Activated CD4-positive, alpha-beta memory T cell treated with anti-CD3 and anti-CD28 coated beads for 36 hours (primary cell): ENCODE measurements at regions of chr18 and their contacts with region 1.

Region 1: DNA sequence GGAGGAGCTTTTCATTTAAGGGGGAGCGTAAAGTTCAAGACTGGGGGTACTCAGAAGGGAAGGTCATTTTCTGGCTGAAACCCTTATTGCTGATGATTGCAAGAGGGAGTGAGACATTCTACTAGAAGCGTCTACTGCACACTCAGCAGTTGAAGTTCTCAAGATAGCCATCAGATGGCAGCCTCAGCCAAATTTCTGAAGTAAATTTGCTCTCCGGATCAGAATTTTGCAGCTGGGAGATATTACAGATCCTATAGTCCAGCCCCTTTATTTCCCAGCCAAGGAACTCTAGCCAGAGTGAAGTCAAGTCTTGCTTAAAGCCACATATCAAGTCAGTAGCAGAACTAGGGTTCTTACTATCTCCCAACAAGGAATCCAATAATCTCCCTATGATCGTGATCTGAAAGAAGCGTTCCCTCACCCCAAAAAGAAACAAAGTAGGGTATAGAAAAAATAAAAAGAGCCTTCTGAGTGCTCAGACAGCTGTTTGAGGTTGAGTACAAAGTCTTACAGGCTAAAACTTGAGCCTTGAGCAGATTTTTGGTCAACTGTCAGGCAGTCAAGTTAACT is 24.0 kb downstream of the RAX start:
- DNase-seq: peak; percentile 54
- H3K4me3 Mint-ChIP-seq: no peak overlapping the region
- H3K27ac Mint-ChIP-seq: no peak overlapping the region
- H3K4me1 Mint-ChIP-seq: no peaks in the 10 kb centered on the region
- H3K27me3 Mint-ChIP-seq: peaks cover 34% of the 10 kb centered on the region

Region 2: DNA sequence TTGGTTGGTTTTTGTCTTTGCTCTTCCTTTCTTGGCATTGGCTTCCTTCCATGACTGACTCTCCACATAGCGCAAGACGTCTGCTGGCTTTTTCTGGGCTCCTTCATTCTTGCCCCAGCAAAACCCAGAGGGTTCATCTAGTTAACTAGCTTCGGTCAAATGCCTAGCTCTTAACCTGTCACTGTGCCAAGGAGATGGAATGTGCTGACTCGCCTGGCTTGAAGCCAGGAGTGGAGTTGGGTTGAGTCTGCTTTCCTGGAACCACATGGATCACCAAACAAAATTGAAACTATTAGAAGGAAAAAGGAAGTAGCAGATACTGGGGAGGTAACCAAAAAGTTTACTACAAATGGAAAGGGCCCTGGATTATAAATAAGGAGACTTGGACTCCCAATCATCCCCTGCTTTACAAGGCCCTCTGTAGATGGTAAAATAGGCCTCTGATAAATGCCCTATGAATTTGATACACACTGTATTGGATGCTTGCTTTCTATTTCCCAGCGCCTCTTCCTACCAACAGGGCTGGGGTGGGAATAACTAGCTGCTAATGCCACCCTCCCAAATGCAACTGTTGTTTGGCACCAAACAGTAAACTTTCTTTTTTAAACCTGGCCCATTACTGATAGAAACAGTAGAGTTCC is 566.7 kb before region 1 on chr18:
- CTCF ChIA-PET with region 1: no interaction called
- POLR2A ChIA-PET with region 1: no interaction called
- intact Hi-C with region 1: no loop called
- DNase-seq: no peak
- H3K4me3 Mint-ChIP-seq: no peak overlapping the region
- H3K27ac Mint-ChIP-seq: no peak overlapping the region
- H3K4me1 Mint-ChIP-seq: peaks cover 57% of the 10 kb centered on the region
- H3K27me3 Mint-ChIP-seq: no peaks in the 10 kb centered on the region

Region 3: DNA sequence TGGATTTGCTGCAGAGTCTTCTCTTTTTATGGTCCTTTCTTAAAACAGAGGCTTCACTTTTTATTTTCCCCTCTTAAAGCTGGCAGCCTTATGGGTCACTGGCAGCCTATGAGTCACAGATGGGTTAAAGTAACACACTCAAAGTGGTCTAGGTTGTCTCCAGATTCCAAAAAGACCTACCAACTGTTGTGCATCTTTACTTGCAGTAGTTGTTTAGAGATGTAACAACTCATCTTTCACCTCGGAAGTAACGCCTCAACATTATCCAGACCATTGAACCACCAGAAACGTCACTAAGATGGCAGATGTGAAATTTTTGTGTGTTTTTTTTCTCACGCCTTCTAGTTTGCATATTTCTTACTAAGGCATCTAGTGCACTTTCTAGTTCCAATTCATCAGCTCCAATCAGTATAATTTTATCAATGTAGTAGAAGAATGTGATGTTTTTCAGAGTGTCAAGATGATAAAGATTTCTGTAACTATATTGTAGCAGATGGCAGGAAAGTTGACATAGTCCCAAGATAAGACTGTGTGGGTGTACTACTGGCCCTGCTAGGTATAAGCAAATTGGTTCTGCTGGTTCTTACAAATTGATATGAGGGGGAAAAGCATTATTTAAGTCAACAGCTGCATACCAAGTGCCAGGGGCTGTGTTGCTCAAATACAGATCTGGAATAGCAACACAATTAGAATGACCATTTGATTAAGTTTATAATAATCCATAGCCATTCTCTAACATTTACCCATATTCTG is 119.2 kb before region 1 on chr18:
- CTCF ChIA-PET with region 1: no interaction called
- POLR2A ChIA-PET with region 1: no interaction called
- intact Hi-C with region 1: no loop called
- DNase-seq: no peak
- H3K4me3 Mint-ChIP-seq: no peak overlapping the region
- H3K27ac Mint-ChIP-seq: no peak overlapping the region
- H3K4me1 Mint-ChIP-seq: no peaks in the 10 kb centered on the region
- H3K27me3 Mint-ChIP-seq: peaks cover 46% of the 10 kb centered on the region

Region 4: DNA sequence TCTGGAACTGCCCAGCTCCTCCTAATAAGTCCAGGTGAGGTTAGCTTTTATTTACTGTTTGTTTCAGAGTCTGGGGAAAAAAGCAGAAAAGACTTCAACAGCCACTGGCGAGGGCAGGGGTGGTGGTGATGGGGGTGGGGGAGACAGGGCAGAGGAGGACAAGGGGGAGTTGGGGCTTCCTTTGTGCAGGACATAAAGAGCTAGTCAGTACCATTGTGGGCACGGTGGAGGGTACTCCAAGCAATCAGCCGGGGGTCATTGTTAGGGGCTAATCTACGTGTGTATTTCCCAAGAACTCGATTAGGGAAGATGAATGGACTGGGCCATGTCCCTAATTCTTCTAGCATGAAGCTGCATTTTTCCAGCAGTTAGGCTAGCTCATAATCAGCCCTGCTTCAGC is 26.8 kb after region 1 on chr18:
- CTCF ChIA-PET with region 1: interaction called, 10 read pairs
- POLR2A ChIA-PET with region 1: no interaction called
- intact Hi-C with region 1: no loop called
- DNase-seq: no peak
- H3K4me3 Mint-ChIP-seq: no peak overlapping the region
- H3K27ac Mint-ChIP-seq: no peak overlapping the region
- H3K4me1 Mint-ChIP-seq: peaks cover 11% of the 10 kb centered on the region
- H3K27me3 Mint-ChIP-seq: peaks cover 56% of the 10 kb centered on the region

Region 5: GRCh38 chr18:59308248-59308937 is 59.1 kb after region 1 on chr18:
- CTCF ChIA-PET with region 1: interaction called, 8 read pairs
- POLR2A ChIA-PET with region 1: no interaction called
- intact Hi-C with region 1: loop called (anchors 1 kb)
- DNase-seq: peak; percentile 75
- H3K4me3 Mint-ChIP-seq: no peak overlapping the region
- H3K27ac Mint-ChIP-seq: no peak overlapping the region
- H3K4me1 Mint-ChIP-seq: peaks cover 3% of the 10 kb centered on the region
- H3K27me3 Mint-ChIP-seq: peaks cover 37% of the 10 kb centered on the region